ENCODE measurements at regions of chr12 and their contacts with region 1.

Region 1: GRCh38 chr12:22624870-22625761 is at the start of gene ETNK1:
- DNase-seq: peak; percentile 86 to 93
- H3K4me3 ChIP-seq: peak within 1 kb of the TSS; percentile 71
- H3K4me1 ChIP-seq: peaks cover 12% of the 10 kb centered on the region
- H3K27me3 ChIP-seq: no peaks in the 10 kb centered on the region

Region 2: GRCh38 chr12:21657326-21658077 is 967.6 kb before region 1 on chr12 and contains the start of gene LDHB:
- in situ Hi-C with region 1: loop called (anchors 25 kb)
- DNase-seq: peak; percentile 95 to 97
- H3K4me3 ChIP-seq: peak within 1 kb of the TSS; percentile 80
- H3K4me1 ChIP-seq: peaks cover 21% of the 10 kb centered on the region
- H3K27me3 ChIP-seq: peaks cover 8% of the 10 kb centered on the region; the same call in 1 of the 2 replicates

Region 3: DNA sequence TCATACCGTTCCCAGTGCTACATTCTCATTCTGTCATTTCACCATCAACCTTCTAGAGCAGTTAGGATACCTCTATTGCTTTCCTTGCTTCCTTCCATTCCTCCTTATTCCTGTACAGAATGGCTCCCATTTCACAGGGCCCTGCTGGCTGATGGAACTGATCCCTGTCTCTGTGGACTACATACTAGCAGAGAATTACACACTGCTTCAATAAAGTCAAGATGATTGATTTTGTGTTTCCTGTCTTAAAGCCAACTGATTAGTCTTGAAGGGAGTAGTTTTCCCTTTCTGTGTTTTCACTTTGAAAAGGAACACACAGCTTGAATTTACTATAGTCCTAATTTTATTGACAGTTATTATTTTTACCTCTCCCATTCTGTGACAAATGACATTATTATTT is 420.7 kb before region 1 on chr12:
- in situ Hi-C with region 1: no loop called
- DNase-seq: no peak
- H3K4me3 ChIP-seq: no peak overlapping the region
- H3K4me1 ChIP-seq: no peaks in the 10 kb centered on the region
- H3K27me3 ChIP-seq: no peaks in the 10 kb centered on the region

Region 4: DNA sequence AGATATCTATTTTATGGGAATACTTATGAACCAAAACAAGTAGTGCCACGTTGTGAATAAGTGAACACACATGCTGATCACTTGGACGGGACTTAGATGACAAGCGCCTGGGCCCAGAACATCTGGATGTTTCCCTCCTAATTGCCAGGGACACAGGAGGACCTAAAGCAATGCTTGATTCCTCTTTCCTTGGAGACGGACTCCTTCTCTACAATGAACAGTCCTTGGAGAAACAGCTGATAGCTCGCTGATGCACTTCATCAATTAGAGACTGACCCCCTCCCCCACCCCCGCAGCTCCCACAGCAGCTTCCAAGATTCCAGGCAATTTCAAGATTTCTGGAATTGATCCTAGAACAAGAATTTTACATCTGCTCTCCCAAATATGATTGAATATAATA is 377.0 kb before region 1 on chr12:
- in situ Hi-C with region 1: no loop called
- DNase-seq: no peak
- H3K4me3 ChIP-seq: no peak overlapping the region
- H3K4me1 ChIP-seq: no peaks in the 10 kb centered on the region
- H3K27me3 ChIP-seq: no peaks in the 10 kb centered on the region

Region 5: GRCh38 chr12:22544038-22544979 is 80.8 kb before region 1 on chr12 and contains the start of gene C2CD5:
- in situ Hi-C with region 1: loop called (anchors 25 kb)
- DNase-seq: peak; percentile 92 to 98
- H3K4me3 ChIP-seq: peak within 1 kb of the TSS; percentile 86
- H3K4me1 ChIP-seq: peaks cover 8% of the 10 kb centered on the region
- H3K27me3 ChIP-seq: no peaks in the 10 kb centered on the region